Heart left ventricle (tissue), 16 donors: ENCODE measurements at regions of chr12 and their contacts with region 1.

Region 1: DNA sequence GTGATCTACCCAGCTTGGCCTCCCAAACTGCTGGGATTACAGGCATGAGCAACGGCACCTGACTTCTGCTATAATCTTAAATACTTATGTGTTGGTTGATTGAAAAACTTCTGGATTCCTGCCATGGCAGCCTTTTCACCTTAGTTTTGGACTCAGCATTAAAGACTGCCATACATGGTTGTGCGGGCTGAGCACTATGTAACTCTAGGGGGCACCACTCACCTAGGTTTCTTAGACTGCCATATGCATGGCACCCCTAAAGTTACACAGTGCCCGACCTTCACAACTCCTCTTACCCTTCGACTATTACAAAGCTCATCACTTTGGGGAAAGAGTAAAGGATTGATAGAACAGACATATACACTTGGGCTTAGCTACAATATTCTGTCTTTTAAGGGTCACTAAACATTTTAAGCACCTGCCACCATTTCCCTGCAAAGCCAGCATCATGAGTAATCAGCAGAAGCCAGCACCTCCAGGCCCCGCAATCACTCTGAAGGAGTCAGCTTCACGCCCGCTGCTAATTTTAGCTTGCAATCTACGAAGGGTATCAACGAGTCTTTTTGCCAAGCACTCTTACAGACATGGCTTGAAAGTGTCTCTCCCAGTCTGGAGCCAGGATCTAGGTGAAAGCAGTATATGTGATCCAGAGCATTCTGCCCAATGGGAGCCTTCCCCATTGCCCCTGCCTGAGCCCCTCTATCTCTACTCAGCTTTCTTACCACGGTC is 59.8 kb downstream of the SUDS3 start:
- DNase-seq: no peak
- ATAC-seq: peak; percentile 64 to 75 (median 74)
- H3K4me3 ChIP-seq: no peak overlapping the region
- H3K27ac ChIP-seq: no peak overlapping the region
- H3K4me1 ChIP-seq: peaks cover 0 to 10% (median 0%) of the 10 kb centered on the region in 12 donors
- H3K27me3 ChIP-seq: peaks cover 0 to 4% (median 0%) of the 10 kb centered on the region in 9 donors
- CTCF ChIP-seq: peak in 11 of 12 donors; percentile 18 to 55 (median 33)
- POLR2A ChIP-seq: no peak

Region 2: GRCh38 chr12:118608770-118609344 is 172.7 kb after region 1 on chr12:
- intact Hi-C with region 1: loop called in 2 of 10 experiments (anchors 5 kb)
- DNase-seq: no peak
- ATAC-seq: peak in 1 of 4 donors; percentile 33
- H3K4me3 ChIP-seq: no peak overlapping the region
- H3K27ac ChIP-seq: no peak overlapping the region
- H3K4me1 ChIP-seq: no peaks in the 10 kb centered on the region
- H3K27me3 ChIP-seq: no peaks in the 10 kb centered on the region
- CTCF ChIP-seq: peak in 6 of 12 donors; percentile 13 to 25 (median 20)
- POLR2A ChIP-seq: no peak